Activated naive CD4-positive, alpha-beta T cell treated with anti-CD3 and anti-CD28 coated beads for 36 hours (primary cell): ENCODE measurements at regions of chr6 and their contacts with region 1.

Region 1: GRCh38 chr6:109009236-109009961 is 85.2 kb downstream of the SESN1 start:
- DNase-seq: peak; percentile 92
- H3K4me3 Mint-ChIP-seq: peak overlapping the region; percentile 95
- H3K27ac Mint-ChIP-seq: peak overlapping the region; percentile 96
- H3K4me1 Mint-ChIP-seq: peaks cover 60% of the 10 kb centered on the region
- H3K27me3 Mint-ChIP-seq: no peaks in the 10 kb centered on the region

Region 2: GRCh38 chr6:107957909-107958688 is 1051.3 kb before region 1 on chr6 and contains the start of gene SEC63:
- CTCF ChIA-PET with region 1: no interaction called
- intact Hi-C with region 1: loop called (anchors 2 kb)
- DNase-seq: peak; percentile 98
- H3K4me3 Mint-ChIP-seq: peak within 1 kb of the TSS; percentile 97
- H3K27ac Mint-ChIP-seq: peak within 1 kb of the TSS; percentile 94
- H3K4me1 Mint-ChIP-seq: peaks cover 32% of the 10 kb centered on the region
- H3K27me3 Mint-ChIP-seq: no peaks in the 10 kb centered on the region
- total RNA-seq, gene SEC63: 78.3 to 86.5 TPM

Region 3: DNA sequence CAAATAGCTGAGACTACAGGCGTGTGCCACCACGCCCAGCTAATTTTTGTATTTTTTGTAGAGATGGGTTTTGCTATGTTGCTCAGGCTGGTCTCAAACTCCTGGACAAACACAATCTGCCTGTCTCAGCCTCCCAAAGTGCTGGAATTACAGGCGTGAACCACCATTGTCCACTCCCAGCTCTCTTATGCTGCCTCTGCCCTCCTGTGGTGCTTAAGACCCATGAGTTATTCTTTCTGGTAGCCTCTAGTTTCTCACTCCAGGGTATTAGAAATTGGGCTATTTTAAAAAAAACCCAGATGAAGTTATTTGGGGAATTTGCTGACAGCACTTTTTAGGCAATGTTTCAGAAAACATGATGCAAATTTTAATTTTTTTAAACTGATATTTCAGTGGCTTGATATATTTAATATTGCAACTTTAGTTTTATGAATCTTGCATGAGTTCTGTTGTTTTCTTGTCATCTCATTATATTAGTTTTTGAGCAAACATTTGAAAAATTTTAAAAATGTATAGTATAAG is 562.7 kb before region 1 on chr6:
- CTCF ChIA-PET with region 1: no interaction called
- intact Hi-C with region 1: loop called (anchors 1 kb)
- DNase-seq: no peak
- H3K4me3 Mint-ChIP-seq: no peak overlapping the region
- H3K27ac Mint-ChIP-seq: no peak overlapping the region
- H3K4me1 Mint-ChIP-seq: peaks cover 20% of the 10 kb centered on the region
- H3K27me3 Mint-ChIP-seq: peaks cover 11% of the 10 kb centered on the region

Region 4: GRCh38 chr6:108883172-108883571 is 126.2 kb before region 1 on chr6:
- CTCF ChIA-PET with region 1: interaction called, 3 read pairs
- intact Hi-C with region 1: loop called (anchors 1 kb)
- DNase-seq: no peak
- H3K4me3 Mint-ChIP-seq: no peak overlapping the region
- H3K27ac Mint-ChIP-seq: no peak overlapping the region
- H3K4me1 Mint-ChIP-seq: peaks cover 22% of the 10 kb centered on the region
- H3K27me3 Mint-ChIP-seq: peaks cover 13% of the 10 kb centered on the region

Region 5: DNA sequence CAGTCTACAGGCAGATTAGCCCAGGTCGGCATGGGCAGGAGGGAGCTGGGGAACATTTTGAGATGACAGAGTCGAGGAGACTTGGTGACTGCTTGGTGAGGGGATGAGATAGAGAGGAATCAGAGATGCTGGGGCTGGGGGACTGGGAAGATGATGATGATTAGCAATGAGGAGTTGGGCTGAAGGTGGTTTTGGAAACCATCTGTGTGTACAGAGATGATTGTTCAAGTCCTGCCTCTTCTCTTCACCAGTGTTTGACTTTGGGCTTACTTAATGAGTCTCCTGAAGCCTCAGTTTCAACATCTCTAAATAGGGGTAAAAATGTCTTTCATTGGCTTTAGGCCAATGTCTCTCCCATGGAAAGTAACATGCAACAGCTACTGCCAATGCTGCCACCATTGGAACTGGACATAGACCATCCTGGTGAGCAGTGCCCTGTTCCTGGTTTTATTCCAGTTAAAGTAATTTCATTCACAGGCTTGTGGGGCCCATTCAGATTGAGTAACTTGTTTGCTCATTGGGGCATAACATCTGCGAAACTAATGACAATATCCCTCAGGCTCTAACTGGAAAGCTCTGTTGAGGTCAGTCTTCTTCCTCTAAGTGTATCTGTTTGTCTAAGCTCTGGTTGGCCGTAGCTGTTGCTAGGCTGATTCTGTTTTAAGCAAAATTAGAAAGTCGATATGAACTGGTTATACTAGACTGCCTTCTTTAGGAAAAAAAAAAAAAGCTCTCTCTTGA is 62.1 kb before region 1 on chr6:
- CTCF ChIA-PET with region 1: no interaction called
- intact Hi-C with region 1: loop called (anchors 2 kb)
- DNase-seq: no peak
- H3K4me3 Mint-ChIP-seq: no peak overlapping the region
- H3K27ac Mint-ChIP-seq: no peak overlapping the region
- H3K4me1 Mint-ChIP-seq: peaks cover 27% of the 10 kb centered on the region
- H3K27me3 Mint-ChIP-seq: no peaks in the 10 kb centered on the region

Region 6: GRCh38 chr6:109095027-109095834 is 85.8 kb after region 1 on chr6 and contains the start of gene CEP57L1:
- CTCF ChIA-PET with region 1: no interaction called
- intact Hi-C with region 1: loop called (anchors 1 kb)
- DNase-seq: peak; percentile 97
- H3K4me3 Mint-ChIP-seq: peak within 1 kb of the TSS; percentile 84
- H3K27ac Mint-ChIP-seq: peak within 1 kb of the TSS; percentile 95
- H3K4me1 Mint-ChIP-seq: peaks cover 38% of the 10 kb centered on the region
- H3K27me3 Mint-ChIP-seq: no peaks in the 10 kb centered on the region
- total RNA-seq, gene CEP57L1: 33.3 to 33.5 TPM